ENCODE measurements at regions of chrX and their contacts with region 1.

Region 1: GRCh38 chrX:130552444-130553073 is 150.8 kb downstream of the RBMX2 start:
- DNase-seq: no peak

Region 2: GRCh38 chrX:130741584-130741983 is 189.0 kb after region 1 on chrX:
- in situ Hi-C with region 1: no loop called
- DNase-seq: no peak

Region 3: DNA sequence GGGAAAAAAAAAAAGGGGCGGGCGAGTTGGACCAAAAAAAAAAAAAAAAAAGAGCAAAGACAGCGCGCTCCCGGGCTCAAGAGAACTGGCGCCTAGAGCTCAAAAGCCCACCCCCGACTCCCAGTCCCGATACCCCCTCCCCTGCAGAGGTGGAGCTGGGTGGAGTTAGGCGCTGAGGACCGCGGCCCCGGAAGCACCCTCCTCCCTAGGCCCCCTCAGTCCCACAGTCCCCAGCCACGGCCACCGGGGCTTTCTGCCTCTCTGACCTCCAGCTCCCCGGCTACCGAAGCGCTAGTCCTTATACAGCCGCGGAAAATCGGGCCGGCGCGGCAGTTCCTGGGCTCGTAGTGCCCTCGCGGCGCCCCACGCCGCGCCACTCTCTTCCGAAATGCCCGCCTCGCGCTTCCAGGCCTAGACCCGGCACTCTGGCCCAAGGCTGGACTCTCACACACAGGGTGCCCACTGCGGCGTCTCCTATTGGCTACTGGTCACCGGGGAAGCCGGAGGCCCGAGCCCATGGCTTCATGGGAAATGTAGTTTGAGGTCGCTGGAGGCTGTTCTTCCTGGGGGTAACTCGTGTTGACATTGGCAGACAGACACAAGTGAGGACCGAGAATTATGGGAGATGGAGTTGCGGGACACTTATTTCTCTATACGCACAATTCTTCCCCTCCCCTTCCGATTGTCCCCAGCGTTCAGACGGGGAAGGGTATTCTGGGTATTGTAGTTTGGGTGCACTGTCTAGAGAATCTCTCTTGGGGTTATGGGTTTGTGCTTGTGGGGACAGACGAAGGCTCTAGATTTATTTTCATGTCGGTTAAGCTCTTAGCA is 350.4 kb after region 1 on chrX and contains the start of gene ENOX2:
- in situ Hi-C with region 1: loop called (anchors 25 kb)
- DNase-seq: peak; percentile 92